MCF 10A (cell line): ENCODE measurements at regions of chr17 and their contacts with region 1.

Region 1: GRCh38 chr17:67280279-67280678 is 35.3 kb upstream of the HELZ start:
- DNase-seq: peak; percentile 96
- H3K4me3 Mint-ChIP-seq: no peak overlapping the region
- H3K27ac Mint-ChIP-seq: peak overlapping the region; percentile 65
- H3K4me1 Mint-ChIP-seq: peaks cover 18% of the 10 kb centered on the region
- H3K27me3 Mint-ChIP-seq: no peaks in the 10 kb centered on the region
- CTCF ChIP-seq: no peak

Region 2: DNA sequence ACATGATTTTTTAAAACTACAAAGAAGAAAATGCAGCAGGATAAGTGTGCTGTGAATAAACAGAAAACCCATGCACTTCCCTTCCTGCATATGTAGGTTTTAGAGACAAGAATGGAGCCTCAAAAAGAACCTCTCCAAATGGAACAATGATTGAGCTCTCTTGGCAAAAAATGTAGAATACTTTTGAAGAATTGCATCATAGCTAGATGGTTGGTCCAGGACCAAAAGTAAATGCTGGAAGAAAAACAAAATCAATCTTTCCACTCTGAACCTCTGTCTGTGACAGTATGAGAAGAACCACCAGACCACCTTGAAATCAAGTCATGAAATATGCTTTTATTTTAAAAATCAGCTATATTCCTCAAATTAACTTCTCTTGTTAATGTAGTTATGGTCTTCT is 52.8 kb before region 1 on chr17:
- CTCF ChIA-PET with region 1: interaction called, 4 read pairs
- POLR2A ChIA-PET with region 1: interaction called, 20 read pairs
- intact Hi-C with region 1: no loop called
- DNase-seq: no peak
- H3K4me3 Mint-ChIP-seq: no peak overlapping the region
- H3K27ac Mint-ChIP-seq: peak overlapping the region; percentile 49
- H3K4me1 Mint-ChIP-seq: peaks cover 11% of the 10 kb centered on the region
- H3K27me3 Mint-ChIP-seq: no peaks in the 10 kb centered on the region
- CTCF ChIP-seq: no peak

Region 3: GRCh38 chr17:67245073-67245755 is 35.1 kb before region 1 on chr17 and contains the start of gene HELZ:
- CTCF ChIA-PET with region 1: interaction called, 3 read pairs
- POLR2A ChIA-PET with region 1: interaction called, 68 read pairs
- intact Hi-C with region 1: no loop called
- DNase-seq: peak; percentile 84
- H3K4me3 Mint-ChIP-seq: peak within 1 kb of the TSS; percentile 85
- H3K27ac Mint-ChIP-seq: peak within 1 kb of the TSS; percentile 91
- H3K4me1 Mint-ChIP-seq: peaks cover 42% of the 10 kb centered on the region
- H3K27me3 Mint-ChIP-seq: no peaks in the 10 kb centered on the region
- CTCF ChIP-seq: no peak
- total RNA-seq, gene HELZ: 56.7 and 71.7 TPM in 2 replicates

Region 4: DNA sequence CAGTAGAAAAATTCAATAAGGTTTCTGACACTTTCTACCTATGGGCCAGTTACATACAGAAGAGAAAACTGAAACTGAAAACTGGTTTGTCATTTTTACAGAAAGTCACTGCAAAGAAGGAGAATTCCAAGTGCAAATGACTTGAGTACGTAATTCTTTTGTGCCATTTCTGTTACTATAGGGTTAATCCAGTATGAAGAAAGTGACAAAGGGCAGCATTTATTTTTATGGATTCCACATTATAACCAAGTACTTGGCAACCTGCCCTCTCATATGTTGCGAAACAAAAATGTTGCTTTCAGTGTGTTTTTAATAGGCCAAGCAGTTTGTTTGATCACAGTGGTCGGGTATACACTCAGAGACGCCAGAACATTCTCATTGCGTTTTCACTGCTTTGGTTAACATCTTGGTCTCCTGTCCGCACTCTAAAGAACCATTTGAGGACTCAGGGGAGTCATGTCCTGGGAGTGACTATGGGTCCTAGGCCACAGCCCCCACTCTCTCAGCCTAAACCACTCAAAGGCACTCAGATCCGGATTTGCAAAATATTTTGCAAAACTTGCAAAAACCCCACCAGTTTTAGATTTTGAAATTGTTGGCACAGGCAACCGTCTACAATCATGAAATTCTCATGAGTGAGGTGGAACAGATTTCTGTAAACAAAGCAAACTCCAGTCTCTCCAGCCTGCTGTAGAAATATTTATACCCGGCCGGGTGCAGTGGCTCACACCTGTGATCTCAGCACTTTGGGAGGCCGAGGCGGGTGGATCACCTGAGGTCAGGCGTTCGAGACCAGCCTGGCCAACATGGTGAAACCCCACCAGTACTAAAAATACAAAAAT is 19.9 kb before region 1 on chr17:
- CTCF ChIA-PET with region 1: interaction called, 3 read pairs
- POLR2A ChIA-PET with region 1: interaction called, 37 read pairs
- intact Hi-C with region 1: no loop called
- DNase-seq: peak; percentile 91
- H3K4me3 Mint-ChIP-seq: peak overlapping the region; percentile 51
- H3K27ac Mint-ChIP-seq: peak overlapping the region; percentile 87
- H3K4me1 Mint-ChIP-seq: peaks cover 19% of the 10 kb centered on the region
- H3K27me3 Mint-ChIP-seq: no peaks in the 10 kb centered on the region
- CTCF ChIP-seq: no peak

Region 5: DNA sequence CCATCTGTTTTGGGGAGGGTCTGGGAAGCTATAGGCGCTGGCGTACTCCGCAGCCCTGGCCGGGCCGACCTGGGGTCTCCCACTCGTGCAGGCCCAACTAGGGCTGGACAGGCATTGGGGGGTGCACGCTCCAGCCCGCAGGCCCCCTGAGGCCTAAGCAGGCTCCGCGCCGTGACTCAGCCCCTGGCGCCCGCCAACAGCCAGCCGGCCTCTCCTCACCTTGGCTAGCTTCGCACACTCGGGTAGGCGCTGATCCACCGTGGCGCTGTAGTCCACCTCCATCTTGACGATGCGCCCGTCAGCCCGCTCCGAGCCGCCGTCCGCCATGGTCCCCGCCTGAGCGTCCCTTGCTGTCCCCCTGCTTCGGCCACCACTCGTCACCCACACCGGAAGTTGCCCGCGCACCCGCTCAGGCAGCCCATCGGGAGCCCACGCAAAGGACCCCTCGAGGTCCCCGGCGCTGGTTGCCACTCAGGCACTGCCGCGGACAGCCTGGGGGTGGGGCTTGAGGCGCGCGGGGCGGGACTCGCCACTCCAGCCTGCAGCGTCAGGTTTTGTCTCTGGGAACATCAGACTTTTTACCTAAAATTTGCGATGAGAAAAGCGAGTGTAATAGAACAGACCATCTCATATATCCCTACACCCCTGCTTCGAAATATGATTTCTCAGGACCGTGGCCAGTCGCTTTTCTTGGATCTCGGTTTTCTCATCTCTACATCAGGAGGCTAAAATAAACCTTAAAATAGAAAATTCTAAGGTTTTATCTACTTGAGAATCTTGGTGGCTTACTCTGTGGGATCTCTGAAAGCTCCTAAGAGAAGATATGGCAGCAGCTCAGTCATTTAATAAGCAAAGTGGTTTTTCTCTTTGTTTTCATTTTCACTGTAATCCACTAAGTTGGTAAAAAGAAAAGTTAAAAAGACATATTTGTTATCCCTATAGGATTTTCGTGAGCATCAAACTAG is 86.2 kb after region 1 on chr17 and contains the start of gene PSMD12:
- CTCF ChIA-PET with region 1: interaction called, 3 read pairs
- POLR2A ChIA-PET with region 1: interaction called, 38 read pairs
- intact Hi-C with region 1: no loop called
- DNase-seq: peak; percentile 90
- H3K4me3 Mint-ChIP-seq: peak within 1 kb of the TSS; percentile 90
- H3K27ac Mint-ChIP-seq: peak within 1 kb of the TSS; percentile 74
- H3K4me1 Mint-ChIP-seq: peaks cover 18% of the 10 kb centered on the region
- H3K27me3 Mint-ChIP-seq: no peaks in the 10 kb centered on the region
- CTCF ChIP-seq: no peak
- total RNA-seq, gene PSMD12: 93.1 and 107 TPM in 2 replicates